ENCODE measurements at regions of chr16 and their contacts with region 1.

Region 1: GRCh38 chr16:75198135-75198600 is 8.8 kb downstream of the CTRB2 start:
- DNase-seq: peak; percentile 71
- H3K4me3 ChIP-seq: peak overlapping the region in 1 of 2 experiments; percentile 19; a peak in 1 of 4 replicates
- H3K27ac ChIP-seq: peak overlapping the region in 1 of 2 experiments; percentile 8; a peak in 1 of 4 replicates
- H3K4me1 ChIP-seq: peaks cover 0 to 8% of the 10 kb centered on the region in 2 experiments; a peak in 1 of 4 replicates
- H3K27me3 ChIP-seq: no peaks in the 10 kb centered on the region
- CTCF ChIP-seq: no peak
- EP300 ChIP-seq: peak in 1 of 2 experiments; percentile 32; a peak in 1 of 4 replicates
- RAD21 ChIP-seq: no peak

Region 2: GRCh38 chr16:74998481-74999218 is 199.5 kb before region 1 on chr16 and contains the start of gene ZNRF1:
- CTCF ChIA-PET with region 1: interaction called, 11 read pairs
- POLR2A ChIA-PET with region 1: no interaction called
- DNase-seq: peak; percentile 98
- H3K4me3 ChIP-seq: peak within 1 kb of the TSS; percentile 72 to 76
- H3K27ac ChIP-seq: peak within 1 kb of the TSS; percentile 31 to 80; a peak in 3 of 4 replicates
- H3K4me1 ChIP-seq: peaks cover 0 to 26% of the 10 kb centered on the region in 2 experiments; a peak in 3 of 4 replicates
- H3K27me3 ChIP-seq: no peaks in the 10 kb centered on the region
- CTCF ChIP-seq: peak; percentile 79
- EP300 ChIP-seq: 0 out of 4 replicates have a peak, but pooled peaks of 1 of the 2 experiments have one; percentile 22
- RAD21 ChIP-seq: peak; percentile 77
- polyA plus RNA-seq, gene ZNRF1: 20.6 and 23.7 TPM in 2 replicates

Region 3: DNA sequence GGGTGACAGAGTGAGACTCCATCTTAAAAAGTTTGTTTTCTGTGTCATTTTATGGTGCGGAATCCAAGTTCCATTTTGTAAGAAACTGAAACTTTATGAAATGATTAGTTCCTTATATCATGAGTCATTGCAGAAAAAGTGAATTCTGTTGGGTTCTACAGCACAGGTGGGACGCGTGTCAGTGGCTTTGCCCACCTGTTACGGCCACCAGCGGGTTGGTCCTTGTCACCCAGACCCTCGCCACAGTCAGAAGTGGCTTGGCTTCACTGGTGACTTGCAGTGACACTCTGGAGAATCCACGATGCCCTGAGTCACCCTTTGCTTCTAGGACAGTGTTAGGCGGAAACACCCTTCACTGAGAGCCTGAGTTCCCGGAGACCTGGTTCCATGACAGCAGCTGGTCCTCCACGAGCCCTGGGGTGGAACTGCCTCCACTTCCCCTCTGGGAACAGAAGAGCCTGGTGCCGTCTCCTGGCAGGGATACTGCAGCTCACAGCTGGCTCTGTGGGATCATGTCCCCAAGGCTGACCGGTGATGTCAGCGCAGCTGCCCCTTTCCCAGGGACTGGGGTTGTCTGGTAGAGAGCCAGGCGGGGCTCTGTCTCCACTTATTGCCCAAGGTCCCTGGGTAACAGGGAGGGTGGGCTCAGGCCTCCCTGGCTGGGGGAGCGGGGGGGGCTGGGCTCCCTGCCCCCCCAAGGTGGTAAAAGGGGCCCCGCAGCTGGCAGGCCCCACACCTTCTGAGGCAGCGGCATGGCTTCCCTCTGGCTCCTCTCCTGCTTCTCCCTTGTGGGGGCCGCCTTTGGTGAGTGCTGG is 20.3 kb after region 1 on chr16 and contains the start of gene CTRB1:
- CTCF ChIA-PET with region 1: interaction called, 18 read pairs
- POLR2A ChIA-PET with region 1: no interaction called
- DNase-seq: peak; percentile 57
- H3K4me3 ChIP-seq: no peak within 1 kb of the TSS
- H3K27ac ChIP-seq: peak within 1 kb of the TSS in 1 of 2 experiments; percentile 12; a peak in 1 of 4 replicates
- H3K4me1 ChIP-seq: peaks cover 0 to 6% of the 10 kb centered on the region in 2 experiments; a peak in 1 of 4 replicates
- H3K27me3 ChIP-seq: no peaks in the 10 kb centered on the region
- CTCF ChIP-seq: no peak
- EP300 ChIP-seq: no peak
- RAD21 ChIP-seq: no peak
- polyA plus RNA-seq, gene CTRB1: not detected in 2 replicates

Region 4: GRCh38 chr16:75305364-75306098 is 107.4 kb after region 1 on chr16:
- CTCF ChIA-PET with region 1: interaction called, 13 read pairs
- POLR2A ChIA-PET with region 1: no interaction called
- DNase-seq: peak; percentile 54
- H3K4me3 ChIP-seq: peak overlapping the region in 1 of 2 experiments; percentile 25; a peak in 2 of 4 replicates
- H3K27ac ChIP-seq: peak overlapping the region; percentile 92 to 99
- H3K4me1 ChIP-seq: peaks cover 22 to 42% of the 10 kb centered on the region in 2 experiments
- H3K27me3 ChIP-seq: no peaks in the 10 kb centered on the region
- CTCF ChIP-seq: peak; percentile 24; the same call in 1 of the 2 replicates
- EP300 ChIP-seq: peak in 1 of 2 experiments; percentile 89; a peak in 2 of 4 replicates
- RAD21 ChIP-seq: no peak

Region 5: GRCh38 chr16:75385507-75386152 is 187.5 kb after region 1 on chr16:
- CTCF ChIA-PET with region 1: interaction called, 34 read pairs
- POLR2A ChIA-PET with region 1: no interaction called
- DNase-seq: peak; percentile 49
- H3K4me3 ChIP-seq: no peak overlapping the region; a peak in 1 of 4 replicates
- H3K27ac ChIP-seq: peak overlapping the region; percentile 19 to 68; a peak in 3 of 4 replicates
- H3K4me1 ChIP-seq: peaks cover 0 to 25% of the 10 kb centered on the region in 2 experiments; a peak in 3 of 4 replicates
- H3K27me3 ChIP-seq: no peaks in the 10 kb centered on the region
- CTCF ChIP-seq: peak; percentile 76
- EP300 ChIP-seq: no peak
- RAD21 ChIP-seq: peak; percentile 81

Region 6: GRCh38 chr16:75402821-75403475 is 204.8 kb after region 1 on chr16:
- CTCF ChIA-PET with region 1: interaction called, 105 read pairs
- POLR2A ChIA-PET with region 1: no interaction called
- DNase-seq: peak; percentile 50
- H3K4me3 ChIP-seq: no peak overlapping the region
- H3K27ac ChIP-seq: peak overlapping the region in 1 of 2 experiments; percentile 98; a peak in 2 of 4 replicates
- H3K4me1 ChIP-seq: peaks cover 3 to 11% of the 10 kb centered on the region in 2 experiments; a peak in 3 of 4 replicates
- H3K27me3 ChIP-seq: no peaks in the 10 kb centered on the region
- CTCF ChIP-seq: peak; percentile 83
- EP300 ChIP-seq: no peak
- RAD21 ChIP-seq: peak; percentile 70

Measured in SK-N-SH (cell line).